ENCODE measurements at regions of chr6 and their contacts with region 1.

Region 1: GRCh38 chr6:111483736-111484632 is 966 bp upstream of the REV3L start:
- DNase-seq: peak; percentile 85
- ATAC-seq: peak; percentile 67
- H3K4me3 Mint-ChIP-seq: peak overlapping the region; percentile 97
- H3K27ac Mint-ChIP-seq: peak overlapping the region; percentile 99
- H3K4me1 Mint-ChIP-seq: peaks cover 37% of the 10 kb centered on the region
- H3K27me3 Mint-ChIP-seq: no peaks in the 10 kb centered on the region
- CTCF ChIP-seq: no peak

Region 2: DNA sequence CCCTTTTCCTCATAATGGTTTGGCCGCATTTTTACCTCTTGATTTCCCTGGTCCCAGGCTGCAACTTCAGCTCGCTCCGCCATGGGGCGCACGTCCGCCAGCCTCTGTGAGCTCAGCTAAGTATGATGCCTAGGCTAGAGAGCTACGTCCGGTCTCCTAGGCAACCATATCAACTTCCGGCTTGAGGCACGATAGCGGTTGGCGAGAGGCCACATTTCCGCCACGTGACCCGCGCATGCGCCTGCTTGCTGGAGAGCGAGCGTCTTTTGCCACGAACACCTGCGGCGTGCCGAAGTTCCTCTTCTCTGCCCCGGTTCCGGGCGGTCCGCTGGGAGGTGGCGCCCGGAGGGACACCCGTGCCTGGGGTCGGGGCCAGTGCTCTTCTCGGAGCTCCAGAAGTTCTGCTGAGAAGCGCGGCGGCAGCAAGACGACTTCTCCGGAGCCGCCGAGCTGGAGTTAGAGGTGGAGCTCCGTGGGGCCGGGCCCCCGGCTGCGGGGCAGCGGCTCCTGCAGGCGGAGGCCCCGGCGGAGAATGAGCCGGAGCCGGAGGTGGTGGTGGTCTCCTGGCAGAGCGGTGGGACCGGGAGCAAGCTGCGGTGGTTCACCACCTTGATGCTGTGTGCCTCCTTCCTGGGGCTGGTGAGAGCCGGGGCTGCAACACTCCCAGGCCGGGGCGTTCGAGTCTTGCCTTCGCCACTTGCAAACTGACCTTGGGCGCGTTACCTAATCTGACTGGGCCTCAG is 224.7 kb before region 1 on chr6:
- CTCF ChIA-PET with region 1: interaction called, 86 read pairs
- POLR2A ChIA-PET with region 1: interaction called, 79 read pairs
- intact Hi-C with region 1: loop called (anchors 1 kb)
- DNase-seq: peak; percentile 97
- ATAC-seq: peak; percentile 93
- H3K4me3 Mint-ChIP-seq: peak overlapping the region; percentile 84
- H3K27ac Mint-ChIP-seq: peak overlapping the region; percentile 87
- H3K4me1 Mint-ChIP-seq: peaks cover 30% of the 10 kb centered on the region
- H3K27me3 Mint-ChIP-seq: no peaks in the 10 kb centered on the region
- CTCF ChIP-seq: peak; percentile 89

Region 3: GRCh38 chr6:111406200-111406721 is 77.7 kb before region 1 on chr6:
- CTCF ChIA-PET with region 1: interaction called, 17 read pairs
- POLR2A ChIA-PET with region 1: interaction called, 14 read pairs
- intact Hi-C with region 1: loop called (anchors 1 kb)
- DNase-seq: no peak
- ATAC-seq: peak; percentile 96
- H3K4me3 Mint-ChIP-seq: peak overlapping the region; percentile 47
- H3K27ac Mint-ChIP-seq: peak overlapping the region; percentile 90
- H3K4me1 Mint-ChIP-seq: peaks cover 36% of the 10 kb centered on the region
- H3K27me3 Mint-ChIP-seq: no peaks in the 10 kb centered on the region
- CTCF ChIP-seq: no peak

Region 4: DNA sequence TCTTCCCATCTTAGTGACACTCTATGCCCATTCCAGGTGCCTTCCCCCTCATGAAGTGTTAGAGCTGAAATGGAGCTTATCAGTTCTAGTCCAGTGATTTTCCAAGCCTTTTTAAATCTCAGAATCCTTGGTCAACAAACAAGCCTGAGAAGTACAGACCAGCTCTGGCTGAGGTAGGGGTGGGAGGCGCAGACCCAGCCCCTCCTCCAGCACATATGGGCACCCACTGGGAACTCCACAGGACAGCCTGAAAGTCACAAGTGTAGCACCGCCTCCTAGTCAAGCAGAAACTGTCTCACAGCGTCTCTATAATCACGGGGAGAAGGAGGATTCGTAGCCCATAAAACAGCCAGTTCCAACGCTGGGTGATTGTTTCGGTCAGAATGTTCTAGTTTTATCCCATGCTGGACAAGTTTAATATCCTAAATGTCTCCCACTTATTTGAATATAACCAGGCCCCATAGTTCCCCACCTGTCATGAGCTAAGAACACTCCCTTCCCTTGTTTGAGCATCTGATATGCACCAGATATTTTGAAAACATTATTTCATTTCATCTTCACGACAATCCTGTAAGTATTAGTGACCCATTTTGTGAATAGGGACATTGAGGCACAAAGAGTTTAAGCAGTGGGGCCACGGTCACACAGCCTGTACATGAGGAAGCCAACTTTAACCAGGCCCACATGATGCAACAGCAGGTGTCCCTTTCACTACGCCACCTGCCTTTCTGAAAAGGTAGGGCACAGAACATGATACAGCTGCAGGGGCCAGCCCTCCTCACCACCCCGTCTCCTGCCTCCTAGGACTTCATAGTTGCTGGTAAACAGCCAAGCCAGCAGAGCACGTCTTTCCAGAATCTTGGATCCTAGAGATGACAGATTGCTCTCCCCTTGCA is 81.6 kb after region 1 on chr6:
- CTCF ChIA-PET with region 1: interaction called, 3 read pairs
- POLR2A ChIA-PET with region 1: interaction called, 6 read pairs
- intact Hi-C with region 1: loop called (anchors 1 kb)
- DNase-seq: no peak
- ATAC-seq: peak; percentile 85
- H3K4me3 Mint-ChIP-seq: no peak overlapping the region
- H3K27ac Mint-ChIP-seq: peak overlapping the region; percentile 80
- H3K4me1 Mint-ChIP-seq: peaks cover 23% of the 10 kb centered on the region
- H3K27me3 Mint-ChIP-seq: no peaks in the 10 kb centered on the region
- CTCF ChIP-seq: no peak

Region 5: GRCh38 chr6:111841822-111842221 is 357.8 kb after region 1 on chr6:
- CTCF ChIA-PET with region 1: no interaction called
- POLR2A ChIA-PET with region 1: no interaction called
- intact Hi-C with region 1: loop called (anchors 10 kb)
- DNase-seq: no peak
- ATAC-seq: no peak
- H3K4me3 Mint-ChIP-seq: no peak overlapping the region
- H3K27ac Mint-ChIP-seq: no peak overlapping the region
- H3K4me1 Mint-ChIP-seq: peaks cover 24% of the 10 kb centered on the region
- H3K27me3 Mint-ChIP-seq: no peaks in the 10 kb centered on the region
- CTCF ChIP-seq: no peak

Measured in activated B cell treated with CpG ODN at 0.5 μM for 24 hours (primary cell).